ENCODE measurements at regions of chr20 and their contacts with region 1.

Region 1: DNA sequence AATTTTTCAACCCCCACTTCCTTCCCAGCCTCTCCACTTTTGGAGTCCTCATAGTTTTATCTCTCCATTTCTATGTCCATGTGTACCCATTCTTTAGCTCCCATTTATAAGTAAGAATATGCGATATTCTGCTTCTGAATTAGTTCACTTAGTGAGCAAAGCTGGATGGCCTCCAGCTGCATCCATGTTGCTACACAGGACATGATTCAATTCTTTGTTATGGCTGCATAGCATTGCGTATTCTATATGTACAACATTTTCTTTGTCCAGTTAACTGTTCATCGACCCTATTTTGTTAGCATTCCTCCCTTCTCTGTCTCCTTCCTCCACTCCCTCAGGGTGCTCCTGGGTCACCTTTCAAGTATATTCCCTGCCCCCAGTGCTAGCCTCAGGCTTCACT is 210.0 kb upstream of the SSTR4 start:
- DNase-seq: peak; percentile 49
- H3K4me3 ChIP-seq: no peak overlapping the region
- H3K27ac ChIP-seq: peak overlapping the region; percentile 38
- H3K4me1 ChIP-seq: peaks cover 56% of the 10 kb centered on the region
- H3K27me3 ChIP-seq: no peaks in the 10 kb centered on the region
- CTCF ChIP-seq: no peak

Region 2: GRCh38 chr20:22623226-22623625 is 201.8 kb before region 1 on chr20:
- CTCF ChIA-PET with region 1: no interaction called
- dilution Hi-C with region 1: no loop called
- in situ Hi-C with region 1: no loop called
- intact Hi-C with region 1: no loop called
- DNase-seq: no peak
- H3K4me3 ChIP-seq: no peak overlapping the region
- H3K27ac ChIP-seq: no peak overlapping the region
- H3K4me1 ChIP-seq: no peaks in the 10 kb centered on the region
- H3K27me3 ChIP-seq: no peaks in the 10 kb centered on the region
- CTCF ChIP-seq: peak in 1 of 2 donors; percentile 19

Region 3: DNA sequence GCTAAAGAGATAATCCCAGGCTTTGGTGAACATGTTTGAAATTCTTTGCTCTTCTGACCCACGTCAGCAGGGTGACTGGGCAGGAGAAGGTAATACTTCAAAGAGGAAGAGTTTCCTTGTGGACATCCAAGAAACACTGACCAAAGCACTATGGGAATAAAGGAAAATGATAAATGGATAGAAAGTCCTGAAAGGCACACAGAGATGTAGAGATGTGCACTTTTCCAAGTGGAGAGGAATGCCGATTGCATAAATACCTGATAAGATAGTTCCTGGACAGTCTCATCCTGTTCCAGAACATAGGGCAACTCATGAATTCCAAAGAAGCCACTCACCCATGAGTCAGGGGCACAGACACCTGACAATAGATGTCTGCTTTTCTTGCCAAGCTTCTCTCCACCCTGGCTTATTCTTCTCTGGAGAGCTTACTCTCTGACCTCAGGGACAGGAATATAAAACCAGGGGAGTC is 49.4 kb before region 1 on chr20:
- CTCF ChIA-PET with region 1: no interaction called
- dilution Hi-C with region 1: no loop called
- in situ Hi-C with region 1: no loop called
- intact Hi-C with region 1: no loop called
- DNase-seq: peak; percentile 88
- H3K4me3 ChIP-seq: no peak overlapping the region
- H3K27ac ChIP-seq: peak overlapping the region; percentile 80
- H3K4me1 ChIP-seq: peaks cover 38% of the 10 kb centered on the region
- H3K27me3 ChIP-seq: no peaks in the 10 kb centered on the region
- CTCF ChIP-seq: no peak

Region 4: GRCh38 chr20:22836877-22837276 is 11.8 kb after region 1 on chr20:
- CTCF ChIA-PET with region 1: no interaction called
- dilution Hi-C with region 1: no loop called
- in situ Hi-C with region 1: no loop called
- intact Hi-C with region 1: loop called (anchors 1 kb)
- DNase-seq: peak; percentile 27
- H3K4me3 ChIP-seq: no peak overlapping the region
- H3K27ac ChIP-seq: no peak overlapping the region
- H3K4me1 ChIP-seq: peaks cover 26% of the 10 kb centered on the region
- H3K27me3 ChIP-seq: no peaks in the 10 kb centered on the region
- CTCF ChIP-seq: no peak

Measured in mammary epithelial cell (primary cell).